ENCODE measurements at regions of chr2 and their contacts with region 1.

Region 1: DNA sequence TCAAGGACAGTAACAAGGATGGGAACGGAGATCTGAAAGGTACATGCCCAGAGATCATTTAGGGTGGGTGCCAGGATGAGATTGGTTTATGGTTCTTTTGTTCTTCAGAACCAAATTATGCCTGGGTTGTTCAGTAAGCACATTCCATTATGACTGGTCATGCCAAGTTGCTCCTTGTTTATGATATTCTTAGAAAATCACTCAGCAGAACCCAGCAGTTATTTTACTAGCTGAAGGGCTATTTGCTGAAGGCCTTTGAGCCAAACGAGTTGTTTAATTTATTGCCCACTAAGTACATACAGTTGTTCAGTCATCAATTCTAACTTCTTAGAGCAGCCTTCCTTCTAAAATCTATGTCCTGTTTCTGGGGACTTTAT is 635 bp downstream of the SLC3A1 start:
- DNase-seq: no peak
- H3K4me3 ChIP-seq: no peak overlapping the region
- H3K27ac ChIP-seq: no peak overlapping the region
- H3K4me1 ChIP-seq: no peaks in the 10 kb centered on the region
- H3K27me3 ChIP-seq: no peaks in the 10 kb centered on the region
- CTCF ChIP-seq: no peak

Region 2: GRCh38 chr2:44071454-44072046 is 204.4 kb before region 1 on chr2:
- CTCF ChIA-PET with region 1: no interaction called
- POLR2A ChIA-PET with region 1: interaction called, 16 read pairs
- intact Hi-C with region 1: no loop called
- DNase-seq: no peak
- H3K4me3 ChIP-seq: no peak overlapping the region
- H3K27ac ChIP-seq: no peak overlapping the region
- H3K4me1 ChIP-seq: no peaks in the 10 kb centered on the region
- H3K27me3 ChIP-seq: no peaks in the 10 kb centered on the region
- CTCF ChIP-seq: no peak

Region 3: DNA sequence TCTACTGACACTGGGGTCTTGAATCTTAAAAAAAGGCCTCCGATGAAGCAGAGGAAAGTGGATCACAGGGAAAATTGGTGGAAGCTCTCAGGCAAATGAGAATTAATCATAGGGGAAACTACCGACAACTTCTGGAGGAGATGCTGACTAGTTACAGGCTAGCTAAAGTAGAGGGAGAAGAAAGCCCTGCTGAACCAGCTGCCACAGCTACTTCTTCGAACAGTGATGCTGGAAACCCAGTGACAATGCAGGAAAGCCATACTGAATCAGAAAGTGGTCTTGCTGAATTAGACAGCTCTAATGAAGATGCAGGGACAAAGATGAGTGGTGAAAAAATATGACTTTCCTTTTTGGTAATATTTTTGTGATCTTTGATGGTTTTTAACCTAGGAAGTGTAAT is 45.5 kb before region 1 on chr2:
- CTCF ChIA-PET with region 1: no interaction called
- POLR2A ChIA-PET with region 1: interaction called, 10 read pairs
- intact Hi-C with region 1: no loop called
- DNase-seq: no peak
- H3K4me3 ChIP-seq: no peak overlapping the region
- H3K27ac ChIP-seq: no peak overlapping the region
- H3K4me1 ChIP-seq: peaks cover 15% of the 10 kb centered on the region
- H3K27me3 ChIP-seq: no peaks in the 10 kb centered on the region
- CTCF ChIP-seq: no peak

Region 4: DNA sequence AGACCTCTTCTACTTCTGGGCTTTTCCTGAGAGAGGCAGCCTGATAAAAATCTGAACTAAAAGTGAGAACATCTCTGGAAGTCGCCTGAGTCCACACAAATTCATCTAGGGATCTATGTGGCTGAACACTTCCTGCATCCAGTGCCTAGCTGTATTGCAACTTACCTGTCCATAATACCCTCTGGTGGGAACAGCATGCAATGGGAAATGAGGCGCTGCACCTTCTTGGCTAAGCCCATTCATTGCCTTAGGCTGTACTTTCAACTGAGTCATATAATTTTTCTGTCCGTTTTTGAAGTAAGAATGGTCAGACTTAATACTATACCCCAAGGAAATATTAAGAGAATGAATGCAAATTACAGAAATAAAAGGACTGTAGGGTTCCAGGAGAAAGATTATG is 711.1 kb after region 1 on chr2:
- CTCF ChIA-PET with region 1: no interaction called
- POLR2A ChIA-PET with region 1: interaction called, 10 read pairs
- intact Hi-C with region 1: no loop called
- DNase-seq: no peak
- H3K4me3 ChIP-seq: no peak overlapping the region
- H3K27ac ChIP-seq: no peak overlapping the region
- H3K4me1 ChIP-seq: no peaks in the 10 kb centered on the region
- H3K27me3 ChIP-seq: no peaks in the 10 kb centered on the region
- CTCF ChIP-seq: no peak

Region 5: DNA sequence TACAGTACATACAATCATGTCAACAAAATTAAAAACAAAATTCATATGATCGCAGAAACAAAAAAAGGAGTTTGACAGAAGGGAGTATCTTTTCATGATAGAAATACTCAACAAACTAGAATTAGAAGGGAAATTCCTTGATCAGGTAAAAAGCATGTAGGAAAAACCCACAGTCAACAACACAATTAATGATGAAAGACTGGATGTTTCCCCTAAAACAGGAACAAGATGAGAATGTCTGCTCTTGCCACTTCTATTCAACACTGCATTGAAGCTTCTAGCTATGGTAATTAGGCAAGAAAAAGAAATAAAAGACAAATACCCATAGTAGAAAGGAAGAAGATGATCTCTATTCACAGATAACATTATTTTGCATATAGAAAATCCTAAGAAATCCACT is 1248.1 kb after region 1 on chr2:
- CTCF ChIA-PET with region 1: no interaction called
- POLR2A ChIA-PET with region 1: no interaction called
- intact Hi-C with region 1: no loop called
- DNase-seq: no peak
- H3K4me3 ChIP-seq: no peak overlapping the region
- H3K27ac ChIP-seq: no peak overlapping the region
- H3K4me1 ChIP-seq: no peaks in the 10 kb centered on the region
- H3K27me3 ChIP-seq: no peaks in the 10 kb centered on the region
- CTCF ChIP-seq: no peak

Measured in PC-9 (cell line).